ENCODE measurements at regions of chr20 and their contacts with region 1.

Region 1: GRCh38 chr20:58980700-58981627 is at the start of gene NELFCD:
- DNase-seq: no peak
- ATAC-seq: peak; percentile 68
- H3K4me3 ChIP-seq: peak within 1 kb of the TSS; percentile 99
- H3K27ac ChIP-seq: peak within 1 kb of the TSS; percentile 87
- H3K4me1 ChIP-seq: peaks cover 38% of the 10 kb centered on the region
- H3K27me3 ChIP-seq: no peaks in the 10 kb centered on the region
- CTCF ChIP-seq: no peak
- EP300 ChIP-seq: no peak
- POLR2A ChIP-seq: peak; percentile 91
- RAD21 ChIP-seq: no peak
- polyA plus RNA-seq, gene NELFCD: 8.9 to 16.7 TPM

Region 2: DNA sequence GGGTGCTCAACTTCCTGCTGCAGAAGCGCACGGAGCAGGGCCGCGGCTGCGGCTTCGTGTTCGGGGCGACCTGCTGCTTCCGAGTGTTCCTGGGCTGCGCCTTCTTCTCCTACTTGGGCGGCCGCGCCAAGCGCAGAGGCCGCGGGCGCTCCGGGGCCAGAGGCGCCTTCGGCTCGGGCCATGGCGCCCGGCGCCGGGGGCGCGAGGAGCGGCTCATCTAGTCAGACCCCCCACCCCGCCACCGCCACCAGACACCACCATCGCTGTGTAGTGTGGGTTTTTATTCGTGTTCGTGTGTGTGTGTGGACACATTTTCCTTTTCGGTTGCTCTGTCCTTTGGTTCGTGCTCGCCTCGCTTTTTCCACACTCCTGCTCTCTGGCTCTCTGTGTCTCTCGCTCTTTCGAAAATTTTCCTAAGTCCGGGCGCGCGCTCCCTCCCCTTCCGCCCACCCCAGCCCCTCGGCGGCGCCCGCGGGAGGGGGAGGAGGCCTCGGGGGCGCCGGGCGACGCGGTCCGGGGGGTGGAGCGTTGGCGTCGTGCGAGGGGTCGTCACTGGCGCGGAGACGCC is 90.4 kb before region 1 on chr20:
- CTCF ChIA-PET with region 1: interaction called, 3 read pairs
- POLR2A ChIA-PET with region 1: interaction called, 5 read pairs
- RAD21 ChIA-PET with region 1: interaction called, 3 read pairs
- SMC1A ChIA-PET with region 1: interaction called, 10 read pairs
- in situ Hi-C with region 1: no loop called
- intact Hi-C with region 1: loop called (anchors 2 kb)
- DNase-seq: no peak
- ATAC-seq: peak; percentile 50
- H3K4me3 ChIP-seq: peak overlapping the region; percentile 76
- H3K27ac ChIP-seq: peak overlapping the region; percentile 87
- H3K4me1 ChIP-seq: peaks cover 30% of the 10 kb centered on the region
- H3K27me3 ChIP-seq: no peaks in the 10 kb centered on the region
- CTCF ChIP-seq: no peak
- EP300 ChIP-seq: no peak
- POLR2A ChIP-seq: peak; percentile 72
- RAD21 ChIP-seq: no peak

Region 3: GRCh38 chr20:58950603-58951002 is 30.4 kb before region 1 on chr20:
- CTCF ChIA-PET with region 1: no interaction called
- POLR2A ChIA-PET with region 1: no interaction called
- RAD21 ChIA-PET with region 1: no interaction called
- SMC1A ChIA-PET with region 1: no interaction called
- in situ Hi-C with region 1: no loop called
- intact Hi-C with region 1: no loop called
- DNase-seq: no peak
- ATAC-seq: no peak
- H3K4me3 ChIP-seq: no peak overlapping the region
- H3K27ac ChIP-seq: no peak overlapping the region
- H3K4me1 ChIP-seq: peaks cover 4% of the 10 kb centered on the region; the same call in 1 of the 2 replicates
- H3K27me3 ChIP-seq: no peaks in the 10 kb centered on the region
- CTCF ChIP-seq: no peak
- EP300 ChIP-seq: no peak
- POLR2A ChIP-seq: no peak
- RAD21 ChIP-seq: no peak

Region 4: GRCh38 chr20:58993332-58994201 is 12.6 kb after region 1 on chr20:
- CTCF ChIA-PET with region 1: interaction called, 3 read pairs
- POLR2A ChIA-PET with region 1: interaction called, 11 read pairs
- RAD21 ChIA-PET with region 1: interaction called, 5 read pairs
- SMC1A ChIA-PET with region 1: interaction called, 11 read pairs
- in situ Hi-C with region 1: no loop called
- intact Hi-C with region 1: no loop called
- DNase-seq: no peak
- ATAC-seq: peak; percentile 76
- H3K4me3 ChIP-seq: no peak overlapping the region
- H3K27ac ChIP-seq: peak overlapping the region; percentile 0; the same call in 1 of the 2 replicates
- H3K4me1 ChIP-seq: peaks cover 14% of the 10 kb centered on the region
- H3K27me3 ChIP-seq: no peaks in the 10 kb centered on the region
- CTCF ChIP-seq: no peak
- EP300 ChIP-seq: peak; percentile 37 to 54; a peak in 2 of 4 replicates
- POLR2A ChIP-seq: peak; percentile 68
- RAD21 ChIP-seq: no peak

Region 5: GRCh38 chr20:59006864-59007664 is 26.1 kb after region 1 on chr20 and contains the start of gene CTSZ:
- CTCF ChIA-PET with region 1: interaction called, 4 read pairs
- POLR2A ChIA-PET with region 1: interaction called, 4 read pairs
- RAD21 ChIA-PET with region 1: interaction called, 3 read pairs
- SMC1A ChIA-PET with region 1: interaction called, 5 read pairs
- in situ Hi-C with region 1: no loop called
- intact Hi-C with region 1: loop called (anchors 2 kb)
- DNase-seq: no peak
- ATAC-seq: peak; percentile 52
- H3K4me3 ChIP-seq: peak within 1 kb of the TSS; percentile 92
- H3K27ac ChIP-seq: peak within 1 kb of the TSS; percentile 95
- H3K4me1 ChIP-seq: peaks cover 35% of the 10 kb centered on the region
- H3K27me3 ChIP-seq: no peaks in the 10 kb centered on the region
- CTCF ChIP-seq: no peak
- EP300 ChIP-seq: no peak
- POLR2A ChIP-seq: peak; percentile 70
- RAD21 ChIP-seq: no peak
- polyA plus RNA-seq, gene CTSZ: 6.0 to 14.0 TPM